ENCODE measurements at regions of chr3 and their contacts with region 1.

Region 1: GRCh38 chr3:192816351-192816750 is 89.0 kb upstream of the FGF12 start:
- DNase-seq: no peak

Region 2: DNA sequence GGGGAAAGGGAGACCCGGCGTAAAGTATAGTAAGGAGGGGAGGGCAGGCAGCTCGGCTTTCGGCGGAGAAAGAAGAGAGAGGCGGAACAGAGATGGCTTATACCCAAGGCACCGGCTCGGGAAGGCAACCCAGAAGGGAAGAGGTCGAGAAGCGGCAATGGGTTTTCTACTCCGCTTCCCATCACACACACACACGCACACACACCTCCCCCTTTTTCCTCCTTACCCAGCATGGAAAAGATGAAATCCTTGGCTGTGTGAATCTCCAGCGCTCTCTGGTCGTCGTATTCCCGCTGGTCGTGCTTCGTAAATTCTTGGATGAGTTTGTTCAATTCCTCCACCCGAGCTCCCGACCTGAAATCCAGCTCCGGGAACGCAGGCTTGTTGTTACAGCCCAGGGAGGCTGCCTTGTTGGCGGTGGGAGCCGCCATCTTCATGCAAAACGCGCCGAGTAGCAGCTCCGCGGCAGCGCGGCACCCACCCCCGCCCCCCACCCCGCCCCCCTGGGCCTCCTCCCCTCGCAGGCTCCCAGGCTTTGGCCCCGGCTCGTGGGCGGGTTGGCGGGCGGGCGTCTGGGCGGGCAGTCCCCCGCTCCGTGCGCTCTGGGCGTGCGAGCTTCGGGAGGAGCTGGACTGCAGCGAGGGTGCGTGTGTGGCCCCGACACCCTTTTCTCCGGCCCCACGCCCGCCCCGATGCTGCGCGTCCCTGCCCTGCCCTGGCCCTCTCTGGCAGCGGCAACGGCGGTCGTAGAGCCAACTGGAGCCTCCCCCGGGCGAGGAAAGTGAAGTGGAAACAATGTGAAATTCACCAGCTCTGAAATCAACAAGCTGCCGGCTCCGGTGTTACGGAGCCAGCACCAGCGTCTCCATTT is 101.3 kb after region 1 on chr3 and contains the start of gene MB21D2:
- intact Hi-C with region 1: loop called (anchors 5 to 10 kb)
- DNase-seq: peak; percentile 95
- total RNA-seq, gene MB21D2: 5.2 to 6.3 TPM

Region 3: DNA sequence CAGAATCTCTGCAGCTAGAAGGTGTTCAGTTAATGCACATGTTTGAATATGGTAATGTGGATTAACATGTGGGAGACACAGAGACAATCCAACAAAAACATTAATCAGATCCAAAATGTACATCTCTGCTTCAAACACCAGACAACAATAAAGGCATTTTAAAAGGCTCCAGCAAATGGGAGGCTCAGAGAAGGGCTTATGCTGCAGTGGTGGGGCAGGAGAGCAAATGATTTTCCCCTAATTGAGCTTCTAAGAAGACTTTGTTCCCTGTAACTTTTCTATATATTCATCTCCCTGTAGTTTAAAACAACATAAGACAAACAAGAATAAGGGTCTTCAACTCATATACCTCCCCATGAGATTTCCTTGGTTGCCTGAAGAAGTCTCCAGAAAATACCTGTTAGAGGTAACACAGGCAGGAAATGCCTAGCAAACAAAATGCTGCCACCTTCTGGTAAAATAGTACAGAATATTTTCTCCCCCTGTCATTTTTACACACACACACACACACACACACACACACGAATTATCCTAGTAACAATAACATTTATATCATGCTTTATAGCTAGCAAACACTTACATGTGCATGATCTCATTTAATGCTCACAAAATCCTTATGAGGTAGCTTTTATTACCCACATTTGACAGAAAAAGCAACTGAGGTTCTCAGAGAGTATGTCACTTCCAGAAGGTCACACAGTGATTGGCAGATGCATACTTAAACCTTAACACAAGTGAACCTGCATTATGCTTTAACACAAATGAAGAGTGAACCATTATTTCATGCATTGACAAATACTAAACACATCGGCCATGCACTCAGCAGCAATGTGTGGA is 224.7 kb after region 1 on chr3:
- intact Hi-C with region 1: loop called (anchors 2 to 5 kb)
- DNase-seq: no peak

Region 4: GRCh38 chr3:193314161-193314560 is 497.8 kb after region 1 on chr3:
- intact Hi-C with region 1: loop called in 1 of 2 experiments (anchors 5 kb)
- DNase-seq: no peak

Region 5: DNA sequence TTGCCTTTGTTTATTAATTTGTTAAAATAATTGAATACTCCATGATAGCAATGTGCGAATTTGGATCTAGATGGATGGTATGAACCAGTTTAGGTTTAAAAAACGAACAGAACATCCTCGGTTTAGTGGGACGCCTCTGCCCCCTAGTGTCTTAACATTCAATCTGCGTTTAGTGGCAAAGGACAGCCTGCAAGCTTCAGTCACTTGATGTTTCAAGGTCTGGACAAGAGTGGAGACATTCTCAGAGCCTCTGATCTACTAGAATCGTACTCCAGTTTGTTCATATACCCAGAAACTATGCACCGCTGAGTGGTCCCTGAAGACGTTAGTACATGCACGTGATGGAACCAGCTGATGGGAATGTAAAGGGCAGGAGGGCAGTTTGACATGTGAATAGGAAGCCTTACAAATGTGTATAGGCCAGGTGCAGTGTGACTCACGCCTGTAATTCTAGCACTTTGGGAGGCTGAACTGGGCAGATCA is 756.1 kb after region 1 on chr3:
- intact Hi-C with region 1: loop called (anchors 5 to 10 kb)
- DNase-seq: no peak

Measured in posterior vena cava (tissue), 2 donors.